ENCODE measurements at regions of chr5 and their contacts with region 1.

Region 1: DNA sequence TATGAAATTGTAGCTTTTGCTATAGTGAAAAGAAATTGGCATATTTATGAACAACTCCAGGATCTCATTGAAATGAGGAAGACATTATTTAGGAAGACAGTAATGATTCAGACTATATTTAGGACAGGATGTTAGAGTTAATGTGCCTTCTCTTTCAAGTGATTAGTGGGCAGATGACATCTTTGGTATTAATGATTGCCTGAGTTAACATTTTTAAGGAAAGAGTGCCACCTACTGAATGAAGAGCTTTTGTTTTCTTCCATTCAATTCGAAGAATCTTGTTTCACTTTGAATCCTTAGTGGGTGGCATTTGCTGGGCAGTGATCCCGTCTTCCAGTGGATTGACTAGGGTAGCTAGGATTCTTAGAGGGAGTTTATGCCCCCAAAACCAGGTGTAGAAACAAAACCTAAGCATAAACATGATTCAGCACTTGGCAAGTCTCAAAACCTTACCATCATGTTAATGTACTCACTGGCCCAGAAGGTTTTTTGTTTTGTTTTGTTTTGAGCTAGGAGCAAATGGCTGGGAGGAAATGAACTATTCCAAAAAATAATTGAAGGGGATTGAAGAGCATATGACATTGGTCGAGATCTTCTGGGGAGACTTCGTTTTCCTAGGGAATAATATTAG is 23.2 kb downstream of the MAP3K1 start:
- DNase-seq: peak; percentile 84
- H3K4me3 ChIP-seq: peak overlapping the region in 1 of 3 experiments; percentile 62
- H3K27ac ChIP-seq: peak overlapping the region; percentile 69
- H3K4me1 ChIP-seq: peaks cover 17% of the 10 kb centered on the region
- H3K27me3 ChIP-seq: no peaks in the 10 kb centered on the region
- CTCF ChIP-seq: peak; percentile 14 to 29
- POLR2A ChIP-seq: no peak

Region 2: DNA sequence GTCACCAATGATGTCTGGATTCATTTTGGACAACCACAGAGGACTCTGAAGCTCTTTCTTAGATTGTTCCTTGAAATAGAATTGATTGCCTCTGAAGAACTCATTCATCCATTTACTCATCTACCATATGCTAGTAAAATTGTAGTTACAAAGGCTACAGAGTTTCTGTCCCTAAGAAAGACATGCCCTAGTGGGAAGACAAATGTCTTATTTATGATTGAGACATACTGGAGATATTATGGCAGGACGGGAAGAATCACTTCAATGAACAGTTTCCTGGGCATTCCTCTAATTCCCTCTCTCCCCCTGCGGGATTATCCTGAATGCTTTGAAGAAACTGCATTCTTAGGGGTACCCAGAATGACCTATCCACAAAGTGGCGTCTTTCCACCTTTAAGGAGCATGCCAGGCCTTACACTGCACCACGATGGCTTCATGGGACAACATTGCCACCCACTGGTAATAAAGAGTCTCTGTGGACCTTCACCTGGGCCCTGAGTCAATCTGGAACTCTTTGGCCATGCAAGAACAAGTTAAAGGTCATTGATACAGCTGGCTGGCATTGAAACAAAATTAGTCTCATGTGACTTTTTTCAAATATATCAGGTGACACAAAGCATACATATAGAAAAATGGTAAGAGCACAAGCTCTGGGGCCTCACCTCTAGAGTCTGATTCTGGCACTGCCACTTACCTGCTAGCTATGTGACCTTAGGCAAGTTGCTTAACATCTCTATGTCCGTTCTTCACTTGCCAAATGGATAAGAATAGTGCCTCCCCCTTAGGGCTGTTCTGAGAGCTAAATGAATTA is 637.5 kb before region 1 on chr5:
- CTCF ChIA-PET with region 1: interaction called, 14 read pairs
- POLR2A ChIA-PET with region 1: no interaction called
- dilution Hi-C with region 1: no loop called
- intact Hi-C with region 1: loop called (anchors 5 kb)
- DNase-seq: peak; percentile 93
- H3K4me3 ChIP-seq: no peak overlapping the region
- H3K27ac ChIP-seq: peak overlapping the region; percentile 10
- H3K4me1 ChIP-seq: peaks cover 17% of the 10 kb centered on the region
- H3K27me3 ChIP-seq: no peaks in the 10 kb centered on the region
- CTCF ChIP-seq: peak; percentile 69 to 80
- POLR2A ChIP-seq: no peak

Region 3: DNA sequence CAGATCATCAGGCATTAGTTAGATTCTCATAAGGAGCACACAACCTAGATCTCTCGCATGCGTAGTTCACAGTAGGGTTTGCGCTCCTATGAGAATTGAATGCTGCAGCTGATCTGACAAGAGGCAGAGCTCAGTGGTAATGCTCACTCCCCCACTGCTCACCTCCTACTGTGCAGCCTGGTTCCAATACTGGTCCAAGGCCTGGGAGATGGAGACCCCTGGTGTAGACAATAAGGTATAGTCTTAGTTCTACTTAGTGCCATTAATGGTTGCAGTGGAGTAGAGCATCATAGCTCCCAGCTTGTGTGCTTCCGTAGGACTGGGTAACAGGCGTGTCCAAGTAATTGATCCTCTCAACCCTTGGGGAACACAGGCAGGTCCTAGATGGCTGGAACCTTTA is 535.0 kb before region 1 on chr5:
- CTCF ChIA-PET with region 1: interaction called, 13 read pairs
- POLR2A ChIA-PET with region 1: no interaction called
- dilution Hi-C with region 1: no loop called
- intact Hi-C with region 1: no loop called
- DNase-seq: peak; percentile 11
- H3K4me3 ChIP-seq: no peak overlapping the region
- H3K27ac ChIP-seq: no peak overlapping the region
- H3K4me1 ChIP-seq: peaks cover 11% of the 10 kb centered on the region
- H3K27me3 ChIP-seq: no peaks in the 10 kb centered on the region
- CTCF ChIP-seq: no peak
- POLR2A ChIP-seq: no peak

Region 4: GRCh38 chr5:56481428-56482357 is 356.8 kb before region 1 on chr5:
- CTCF ChIA-PET with region 1: interaction called, 4 read pairs
- POLR2A ChIA-PET with region 1: no interaction called
- dilution Hi-C with region 1: no loop called
- intact Hi-C with region 1: loop called (anchors 1 kb)
- DNase-seq: peak; percentile 53
- H3K4me3 ChIP-seq: peak overlapping the region; percentile 44 to 88 (median 87)
- H3K27ac ChIP-seq: peak overlapping the region; percentile 32
- H3K4me1 ChIP-seq: peaks cover 12% of the 10 kb centered on the region
- H3K27me3 ChIP-seq: no peaks in the 10 kb centered on the region
- CTCF ChIP-seq: peak; percentile 16 to 63
- POLR2A ChIP-seq: no peak

Region 5: DNA sequence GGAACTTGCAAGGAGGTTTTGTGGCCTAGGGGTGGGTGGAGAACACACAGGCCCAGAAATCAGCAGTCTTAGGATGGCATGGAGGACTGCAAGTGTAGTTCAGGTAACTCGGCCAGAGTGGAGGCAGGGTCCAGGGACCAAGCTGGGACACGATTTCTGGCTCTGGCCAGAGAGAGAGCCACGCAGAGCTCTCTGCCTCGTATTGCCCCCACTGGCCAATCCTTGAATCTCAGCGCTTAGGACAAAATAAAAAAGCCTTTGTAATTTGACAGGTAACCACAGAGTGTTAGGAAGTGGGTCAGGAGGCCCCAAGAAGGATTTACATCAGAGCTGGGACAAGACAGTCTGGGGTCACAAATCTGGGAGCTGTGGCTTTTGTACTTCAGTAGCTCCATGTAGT is 11.5 kb before region 1 on chr5:
- CTCF ChIA-PET with region 1: interaction called, 43 read pairs
- POLR2A ChIA-PET with region 1: no interaction called
- dilution Hi-C with region 1: no loop called
- intact Hi-C with region 1: no loop called
- DNase-seq: no peak
- H3K4me3 ChIP-seq: no peak overlapping the region
- H3K27ac ChIP-seq: no peak overlapping the region
- H3K4me1 ChIP-seq: no peaks in the 10 kb centered on the region
- H3K27me3 ChIP-seq: no peaks in the 10 kb centered on the region
- CTCF ChIP-seq: peak in 1 of 2 donors; percentile 20
- POLR2A ChIP-seq: no peak

Region 6: GRCh38 chr5:57032151-57032551 is 193.6 kb after region 1 on chr5:
- CTCF ChIA-PET with region 1: no interaction called
- POLR2A ChIA-PET with region 1: no interaction called
- dilution Hi-C with region 1: no loop called
- intact Hi-C with region 1: no loop called
- DNase-seq: no peak
- H3K4me3 ChIP-seq: no peak overlapping the region
- H3K27ac ChIP-seq: no peak overlapping the region
- H3K4me1 ChIP-seq: no peaks in the 10 kb centered on the region
- H3K27me3 ChIP-seq: peaks cover 5 to 7% of the 10 kb centered on the region in 2 experiments
- CTCF ChIP-seq: no peak
- POLR2A ChIP-seq: no peak

Region 7: GRCh38 chr5:57124014-57124413 is 285.5 kb after region 1 on chr5:
- CTCF ChIA-PET with region 1: no interaction called
- POLR2A ChIA-PET with region 1: no interaction called
- dilution Hi-C with region 1: no loop called
- intact Hi-C with region 1: no loop called
- DNase-seq: no peak
- H3K4me3 ChIP-seq: no peak overlapping the region
- H3K27ac ChIP-seq: no peak overlapping the region
- H3K4me1 ChIP-seq: no peaks in the 10 kb centered on the region
- H3K27me3 ChIP-seq: no peaks in the 10 kb centered on the region
- CTCF ChIP-seq: no peak
- POLR2A ChIP-seq: no peak

Region 8: DNA sequence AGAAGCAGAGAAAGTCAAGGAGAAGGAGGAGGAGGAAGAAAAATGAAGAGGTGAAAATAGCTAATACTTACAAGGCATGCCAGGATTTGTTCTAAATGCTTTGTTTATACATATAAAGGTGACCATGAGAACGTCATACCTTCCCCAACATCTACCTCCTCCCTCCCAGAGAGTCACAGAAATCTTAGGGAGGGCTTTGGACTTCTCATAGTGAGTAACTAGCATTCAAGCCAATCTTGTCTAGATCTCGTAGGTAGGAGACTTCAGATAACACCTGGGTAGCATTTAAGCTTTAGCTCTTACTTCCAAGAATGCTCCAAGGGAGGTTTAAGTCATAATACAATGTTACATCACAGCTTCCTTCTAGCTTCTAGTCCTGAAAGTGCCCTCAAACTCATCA is 298.9 kb after region 1 on chr5:
- CTCF ChIA-PET with region 1: interaction called, 14 read pairs
- POLR2A ChIA-PET with region 1: no interaction called
- dilution Hi-C with region 1: no loop called
- intact Hi-C with region 1: no loop called
- DNase-seq: no peak
- H3K4me3 ChIP-seq: no peak overlapping the region
- H3K27ac ChIP-seq: no peak overlapping the region
- H3K4me1 ChIP-seq: no peaks in the 10 kb centered on the region
- H3K27me3 ChIP-seq: no peaks in the 10 kb centered on the region
- CTCF ChIP-seq: no peak
- POLR2A ChIP-seq: no peak

Measured in endothelial cell of umbilical vein (primary cell).